ENCODE measurements at regions of chr10 and their contacts with region 1.

Region 1: DNA sequence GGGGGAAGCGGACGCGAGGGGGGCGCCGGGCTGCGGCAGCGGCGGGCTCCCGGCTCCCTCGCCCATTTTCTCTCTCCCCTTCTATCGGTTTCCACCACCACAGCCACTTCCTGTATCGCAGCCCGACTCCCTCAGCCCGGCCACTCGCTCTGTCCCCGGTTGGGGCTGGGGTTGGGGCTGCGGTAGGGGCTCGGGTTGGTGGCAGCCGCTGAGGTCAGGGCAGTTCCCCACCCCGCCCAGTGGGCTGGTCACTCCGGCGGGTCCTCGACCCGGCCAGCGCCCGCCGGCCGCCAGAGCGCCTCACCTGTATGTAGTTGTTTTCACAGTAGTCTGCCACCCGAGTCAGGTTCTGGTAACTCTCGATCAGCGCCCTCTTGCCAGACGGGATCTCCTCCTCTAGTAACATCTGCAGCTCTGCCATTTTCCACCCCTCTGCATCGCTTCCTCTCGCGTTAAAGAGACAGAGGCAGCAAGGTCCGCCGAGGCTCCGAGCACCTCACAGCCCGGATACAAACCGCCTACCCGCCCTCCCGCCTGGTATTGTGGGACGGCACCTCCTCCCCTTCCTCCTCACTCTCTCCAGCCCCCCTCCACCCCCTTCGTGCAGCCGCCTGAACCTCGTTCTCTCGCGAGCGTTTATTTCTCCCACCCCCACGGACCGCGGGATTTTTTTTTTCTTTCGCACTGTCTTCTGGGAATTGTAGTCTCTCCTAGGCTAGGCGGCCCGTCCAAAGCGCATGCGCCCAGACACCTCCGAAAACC is at the start of gene ABI1:
- DNase-seq: peak; percentile 96 to 97
- ATAC-seq: peak; percentile 95
- H3K4me3 ChIP-seq: peak within 1 kb of the TSS; percentile 91 to 99 (median 96)
- H3K27ac ChIP-seq: peak within 1 kb of the TSS; percentile 92 to 99 (median 98)
- H3K4me1 ChIP-seq: peaks cover 29 to 39% of the 10 kb centered on the region in 2 donors
- H3K27me3 ChIP-seq: no peaks in the 10 kb centered on the region
- CTCF ChIP-seq: no peak
- POLR2A ChIP-seq: peak; percentile 94 to 97
- total RNA-seq, gene ABI1: 20.9 to 32.6 (median 28.3) TPM

Region 2: DNA sequence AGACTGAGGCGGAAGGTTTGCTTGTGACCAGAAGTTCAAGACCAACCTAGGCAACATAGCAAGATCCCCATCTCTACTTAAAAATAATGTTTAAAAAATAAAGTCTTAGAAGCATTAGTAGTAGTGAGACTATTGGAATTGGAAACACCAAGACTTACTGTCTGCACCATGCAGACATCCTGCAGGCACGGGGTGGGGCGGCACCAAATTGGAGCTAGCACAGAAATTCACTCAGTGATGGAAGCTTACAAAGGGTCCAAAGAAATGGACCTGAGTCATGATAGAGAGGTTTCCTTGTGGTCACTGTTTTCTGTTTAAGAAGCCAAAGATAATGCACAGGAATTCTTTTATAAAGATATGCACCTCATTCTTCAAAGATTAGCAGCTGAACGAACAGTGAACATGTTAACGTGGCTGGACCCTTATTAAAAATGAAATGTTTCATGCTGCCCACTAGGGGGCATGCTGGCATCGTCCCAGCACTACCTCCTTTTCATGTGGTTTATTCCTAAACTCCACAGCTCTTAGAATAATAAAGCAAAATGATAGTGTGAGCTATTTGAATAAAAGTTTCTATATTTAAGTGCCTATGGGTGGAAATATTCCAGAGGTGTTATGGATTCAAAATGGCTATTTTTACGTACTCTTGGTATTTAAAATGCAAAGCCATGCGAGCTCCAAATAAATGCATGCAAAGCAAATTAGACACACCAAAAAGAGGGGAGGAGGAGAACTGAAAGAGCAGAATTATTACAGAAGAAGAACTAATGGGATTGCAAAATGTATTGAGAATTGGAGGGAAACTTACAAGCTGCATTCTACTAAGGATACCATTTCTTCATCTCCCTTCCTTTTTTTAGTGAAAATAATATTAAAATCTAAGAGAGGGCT is 134.5 kb before region 1 on chr10:
- in situ Hi-C with region 1: loop called in 1 of 4 experiments (anchors 25 kb)
- intact Hi-C with region 1: no loop called
- DNase-seq: peak; percentile 25 to 35
- ATAC-seq: no peak
- H3K4me3 ChIP-seq: no peak overlapping the region
- H3K27ac ChIP-seq: no peak overlapping the region
- H3K4me1 ChIP-seq: no peaks in the 10 kb centered on the region
- H3K27me3 ChIP-seq: no peaks in the 10 kb centered on the region
- CTCF ChIP-seq: peak; percentile 65 to 74 (median 70)
- POLR2A ChIP-seq: no peak

Region 3: GRCh38 chr10:27099916-27100812 is 239.5 kb after region 1 on chr10 and contains the start of gene ANKRD26:
- in situ Hi-C with region 1: no loop called
- intact Hi-C with region 1: loop called (anchors 1 kb)
- DNase-seq: peak; percentile 95 to 97
- ATAC-seq: peak; percentile 99 to 100
- H3K4me3 ChIP-seq: peak within 1 kb of the TSS; percentile 77 to 88 (median 86)
- H3K27ac ChIP-seq: peak within 1 kb of the TSS; percentile 88 to 93 (median 88)
- H3K4me1 ChIP-seq: peaks cover 12 to 15% of the 10 kb centered on the region in 2 donors
- H3K27me3 ChIP-seq: no peaks in the 10 kb centered on the region
- CTCF ChIP-seq: peak in 1 of 5 experiments; percentile 14
- POLR2A ChIP-seq: peak; percentile 57 to 63
- total RNA-seq, gene ANKRD26: 3.6 to 14.7 (median 8.4) TPM

Region 4: GRCh38 chr10:27241652-27242472 is 381.2 kb after region 1 on chr10:
- in situ Hi-C with region 1: loop called in 1 of 4 experiments (anchors 25 kb)
- intact Hi-C with region 1: loop called (anchors 5 kb)
- DNase-seq: peak; percentile 86 to 88
- ATAC-seq: peak; percentile 83 to 84
- H3K4me3 ChIP-seq: peak overlapping the region; percentile 62 to 98 (median 83)
- H3K27ac ChIP-seq: peak overlapping the region; percentile 95 to 98 (median 98)
- H3K4me1 ChIP-seq: peaks cover 12 to 13% of the 10 kb centered on the region in 2 donors
- H3K27me3 ChIP-seq: no peaks in the 10 kb centered on the region
- CTCF ChIP-seq: peak; percentile 28 to 60 (median 39)
- POLR2A ChIP-seq: peak; percentile 95 to 96

Region 5: DNA sequence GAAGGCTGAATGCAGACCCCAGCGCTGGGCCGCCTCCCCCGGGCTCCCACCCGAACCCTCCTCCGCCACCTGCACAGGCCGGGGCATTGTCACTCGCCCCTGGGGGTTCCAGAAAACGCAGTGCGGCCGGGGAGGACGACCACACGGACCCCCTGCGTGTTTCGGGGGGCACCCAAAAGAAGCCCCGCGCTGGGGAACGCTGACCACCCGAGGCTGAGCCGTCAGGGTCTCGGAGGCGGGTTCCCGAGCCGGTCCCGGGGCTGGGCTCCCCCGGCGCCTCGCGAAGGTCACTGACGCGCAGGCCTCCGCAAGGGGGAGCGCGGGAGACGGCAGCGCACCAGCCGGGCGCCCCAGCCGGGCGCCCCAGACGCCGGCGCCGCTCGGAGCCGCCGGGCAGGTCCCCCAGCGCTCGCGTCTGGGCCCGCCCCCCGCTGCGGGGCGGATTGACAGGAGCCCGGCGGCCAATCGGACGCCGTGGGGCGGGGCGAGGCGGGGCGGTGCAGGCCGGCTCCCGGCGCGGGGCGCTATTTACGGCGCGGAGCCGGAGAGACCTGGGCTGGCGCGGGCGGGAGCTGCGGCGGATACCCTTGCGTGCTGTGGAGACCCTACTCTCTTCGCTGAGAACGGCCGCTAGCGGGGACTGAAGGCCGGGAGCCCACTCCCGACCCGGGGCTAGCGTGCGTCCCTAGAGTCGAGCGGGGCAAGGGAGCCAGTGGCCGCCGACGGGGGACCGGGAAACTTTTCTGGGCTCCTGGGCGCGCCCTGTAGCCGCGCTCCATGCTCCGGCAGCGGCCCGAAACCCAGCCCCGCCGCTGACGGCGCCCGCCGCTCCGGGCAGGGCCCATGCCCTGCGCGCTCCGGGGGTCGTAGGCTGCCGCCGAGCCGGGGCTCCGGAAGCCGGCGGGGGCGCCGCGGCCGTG is 1816.6 kb after region 1 on chr10 and contains the start of gene BAMBI:
- in situ Hi-C with region 1: no loop called
- intact Hi-C with region 1: loop called (anchors 10 kb)
- DNase-seq: peak; percentile 74 to 79
- ATAC-seq: peak; percentile 91 to 93
- H3K4me3 ChIP-seq: peak within 1 kb of the TSS; percentile 65 to 83 (median 72)
- H3K27ac ChIP-seq: peak within 1 kb of the TSS in 3 of 4 donors; percentile 55 to 67 (median 62)
- H3K4me1 ChIP-seq: peaks cover 18 to 21% of the 10 kb centered on the region in 2 donors
- H3K27me3 ChIP-seq: peaks cover 0 to 13% (median 4%) of the 10 kb centered on the region in 3 donors
- CTCF ChIP-seq: peak; percentile 12 to 83 (median 72)
- POLR2A ChIP-seq: peak; percentile 84 to 95
- total RNA-seq, gene BAMBI: 0.31 to 1.8 (median 0.82) TPM in 3 of 4 donors, not detected in the other